Gastrocnemius medialis (tissue), 4 donors: ENCODE measurements at regions of chr9 and their contacts with region 1.

Region 1: GRCh38 chr9:73151653-73152542 is at the start of gene ANXA1:
- DNase-seq: no peak
- ATAC-seq: peak; percentile 73 to 75
- H3K4me3 ChIP-seq: peak within 1 kb of the TSS; percentile 46 to 55 (median 51)
- H3K27ac ChIP-seq: peak within 1 kb of the TSS; percentile 45 to 68 (median 66)
- H3K4me1 ChIP-seq: peaks cover 17 to 32% of the 10 kb centered on the region in 2 donors
- H3K27me3 ChIP-seq: no peaks in the 10 kb centered on the region
- CTCF ChIP-seq: no peak
- POLR2A ChIP-seq: peak; percentile 46 to 70
- total RNA-seq, gene ANXA1: 22.2 to 41.7 (median 31.1) TPM

Region 2: DNA sequence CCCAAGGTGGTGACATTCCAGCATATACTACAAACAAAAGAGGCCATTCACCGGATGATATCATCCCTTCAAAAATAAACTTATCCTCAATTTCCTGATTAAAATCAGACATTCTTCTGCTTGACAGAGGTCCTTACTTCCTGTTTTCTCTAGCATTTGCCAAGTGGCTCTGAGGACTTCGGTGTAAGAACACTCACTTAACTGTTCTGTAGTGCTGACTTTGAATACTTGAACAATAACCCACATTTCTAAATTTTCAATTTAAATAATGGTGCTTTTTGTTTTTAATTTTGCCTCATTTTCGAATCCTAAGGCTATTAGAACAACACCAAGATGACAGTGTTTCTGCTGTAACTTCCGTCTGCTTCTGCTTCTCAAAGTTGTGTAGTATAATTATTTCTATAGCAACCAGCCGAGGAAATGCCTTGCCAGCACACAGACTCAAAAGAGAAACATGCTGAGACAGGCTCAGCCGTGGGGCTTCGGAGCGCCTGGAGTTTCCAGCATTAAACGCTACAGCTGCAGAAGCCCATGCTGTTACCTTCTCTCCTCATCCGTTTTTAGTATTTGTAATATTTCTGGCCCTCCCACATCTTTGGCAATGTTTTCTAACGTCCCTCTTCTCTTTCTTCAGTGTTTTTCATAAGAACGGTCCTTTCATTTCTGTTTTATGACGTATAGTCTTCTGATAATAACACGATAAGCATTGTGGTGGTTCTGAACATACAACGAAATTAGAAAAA is 19.7 kb before region 1 on chr9:
- in situ Hi-C with region 1: no loop called
- intact Hi-C with region 1: loop called (anchors 1 kb)
- DNase-seq: peak; percentile 44 to 48
- ATAC-seq: peak; percentile 85 to 88
- H3K4me3 ChIP-seq: peak overlapping the region; percentile 58 to 81 (median 61)
- H3K27ac ChIP-seq: peak overlapping the region; percentile 60 to 78 (median 68)
- H3K4me1 ChIP-seq: peaks cover 10 to 31% of the 10 kb centered on the region in 2 donors
- H3K27me3 ChIP-seq: no peaks in the 10 kb centered on the region
- CTCF ChIP-seq: no peak
- POLR2A ChIP-seq: peak in 1 of 2 donors; percentile 46